CD8-positive, alpha-beta T cell (primary cell): ENCODE measurements at regions of chr18 and their contacts with region 1.

Region 1: GRCh38 chr18:3189884-3190283 is 29.9 kb downstream of the MYOM1 start:
- DNase-seq: no peak
- ATAC-seq: no peak
- H3K4me3 ChIP-seq: no peak overlapping the region
- H3K4me3 Mint-ChIP-seq: no peak overlapping the region
- H3K27ac ChIP-seq: no peak overlapping the region
- H3K27ac Mint-ChIP-seq: no peak overlapping the region
- H3K4me1 ChIP-seq: no peaks in the 10 kb centered on the region
- H3K4me1 Mint-ChIP-seq: no peaks in the 10 kb centered on the region
- H3K27me3 ChIP-seq: no peaks in the 10 kb centered on the region
- H3K27me3 Mint-ChIP-seq: no peaks in the 10 kb centered on the region
- CTCF ChIP-seq: no peak

Region 2: GRCh38 chr18:3209859-3210569 is 20.1 kb after region 1 on chr18:
- CTCF ChIA-PET with region 1: no interaction called
- POLR2A ChIA-PET with region 1: interaction called, 4 read pairs
- intact Hi-C with region 1: loop called in 1 of 2 experiments (anchors 2 kb)
- DNase-seq: no peak
- ATAC-seq: peak; percentile 27
- H3K4me3 ChIP-seq: no peak overlapping the region
- H3K4me3 Mint-ChIP-seq: no peak overlapping the region
- H3K27ac ChIP-seq: no peak overlapping the region
- H3K27ac Mint-ChIP-seq: no peak overlapping the region
- H3K4me1 ChIP-seq: peaks cover 13% of the 10 kb centered on the region
- H3K4me1 Mint-ChIP-seq: peaks cover 17% of the 10 kb centered on the region
- H3K27me3 ChIP-seq: no peaks in the 10 kb centered on the region
- H3K27me3 Mint-ChIP-seq: no peaks in the 10 kb centered on the region
- CTCF ChIP-seq: no peak

Region 3: DNA sequence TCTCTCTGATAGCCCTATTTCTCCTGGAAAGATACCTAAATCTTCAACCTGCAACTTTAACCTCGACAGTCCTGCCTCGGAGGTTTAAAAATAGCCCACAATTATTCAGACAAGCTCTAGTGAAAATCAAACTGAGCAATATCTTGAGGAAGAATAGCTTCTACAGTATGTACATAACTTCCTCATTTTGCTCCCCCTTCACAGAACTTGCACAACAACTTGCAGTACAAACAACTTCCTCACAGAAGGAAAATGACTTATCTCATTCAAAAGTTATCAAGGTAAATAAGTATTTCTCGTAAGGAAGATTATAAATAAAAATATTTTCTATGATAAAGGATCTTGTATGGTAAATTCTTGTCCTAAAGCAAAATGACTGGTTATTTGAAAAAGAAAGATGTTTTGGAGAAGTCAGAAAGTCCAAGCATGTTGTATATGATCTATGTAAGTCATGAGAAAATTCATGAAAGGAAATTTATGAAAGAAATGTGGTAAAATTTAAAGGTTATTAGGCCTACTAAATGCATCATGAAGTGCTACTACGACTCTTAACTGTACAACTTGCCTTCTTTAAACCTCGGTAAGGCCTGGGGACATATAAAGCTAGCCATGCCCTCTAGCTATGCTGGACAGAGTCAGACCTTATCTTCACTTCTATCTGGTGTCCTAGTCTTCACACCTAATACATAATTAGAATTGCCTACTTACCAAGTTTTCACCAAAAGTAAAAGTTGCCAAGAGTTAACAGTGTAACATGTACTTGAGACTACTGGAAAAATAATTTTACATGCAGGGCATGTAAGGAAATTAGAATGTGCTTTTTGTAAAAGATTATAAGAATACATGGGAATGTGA is 870.8 kb after region 1 on chr18:
- CTCF ChIA-PET with region 1: no interaction called
- POLR2A ChIA-PET with region 1: no interaction called
- intact Hi-C with region 1: no loop called
- DNase-seq: no peak
- ATAC-seq: no peak
- H3K4me3 ChIP-seq: no peak overlapping the region
- H3K4me3 Mint-ChIP-seq: no peak overlapping the region
- H3K27ac ChIP-seq: no peak overlapping the region
- H3K27ac Mint-ChIP-seq: no peak overlapping the region
- H3K4me1 ChIP-seq: no peaks in the 10 kb centered on the region
- H3K4me1 Mint-ChIP-seq: no peaks in the 10 kb centered on the region
- H3K27me3 ChIP-seq: no peaks in the 10 kb centered on the region
- H3K27me3 Mint-ChIP-seq: peaks cover 3% of the 10 kb centered on the region
- CTCF ChIP-seq: no peak